ENCODE measurements at regions of chr19 and their contacts with region 1.

Region 1: GRCh38 chr19:51660975-51661600 is 14.5 kb upstream of the SIGLEC14 start:
- DNase-seq: peak; percentile 67
- CTCF ChIP-seq: peak; percentile 60

Region 2: DNA sequence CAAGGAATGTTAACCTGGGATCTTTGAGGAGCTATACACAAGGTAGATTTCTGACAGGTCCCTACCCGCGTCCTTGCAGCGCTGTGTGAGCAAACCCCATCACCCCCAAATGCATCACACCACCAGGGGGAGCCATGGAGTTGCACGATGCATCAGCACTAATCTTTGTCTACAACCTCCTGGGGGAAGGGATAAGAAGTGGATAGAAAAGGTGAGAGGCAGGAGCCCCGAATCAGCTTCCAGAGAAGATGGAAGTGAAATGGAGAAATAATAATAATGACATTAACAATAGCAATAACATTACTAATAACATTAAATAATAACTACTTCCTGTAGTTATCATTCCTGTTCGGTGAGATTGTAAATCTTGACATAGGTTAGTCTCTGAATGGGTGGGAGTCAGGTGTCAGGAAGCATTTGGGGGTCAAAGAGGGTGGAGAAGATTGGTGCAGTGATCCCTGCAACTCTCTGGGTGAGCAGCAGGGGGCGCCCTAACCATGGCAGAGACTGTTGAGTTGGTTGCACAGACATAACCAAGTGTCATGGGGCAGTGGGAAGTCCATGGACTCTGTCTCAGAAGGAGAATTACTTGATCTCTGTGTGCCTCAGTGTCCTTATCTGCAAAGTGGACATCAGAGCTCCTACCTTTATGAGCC is 502.5 kb before region 1 on chr19:
- in situ Hi-C with region 1: loop called (anchors 25 kb)
- DNase-seq: peak; percentile 61
- CTCF ChIP-seq: peak; percentile 77

Region 3: GRCh38 chr19:51338563-51339312 is 322.4 kb before region 1 on chr19:
- in situ Hi-C with region 1: loop called (anchors 25 kb)
- DNase-seq: peak; percentile 95
- CTCF ChIP-seq: peak; percentile 93